ENCODE measurements at regions of chr6 and their contacts with region 1.

Region 1: GRCh38 chr6:32244946-32245398 is 21.1 kb upstream of the NOTCH4 start:
- DNase-seq: peak; percentile 23 to 89
- H3K4me3 ChIP-seq: peak overlapping the region in 1 of 2 donors; percentile 29
- H3K27ac ChIP-seq: peak overlapping the region; percentile 18 to 49
- H3K4me1 ChIP-seq: peaks cover 3% of the 10 kb centered on the region in 2 donors
- H3K27me3 ChIP-seq: no peaks in the 10 kb centered on the region
- CTCF ChIP-seq: peak; percentile 89 to 92 (median 89)

Region 2: DNA sequence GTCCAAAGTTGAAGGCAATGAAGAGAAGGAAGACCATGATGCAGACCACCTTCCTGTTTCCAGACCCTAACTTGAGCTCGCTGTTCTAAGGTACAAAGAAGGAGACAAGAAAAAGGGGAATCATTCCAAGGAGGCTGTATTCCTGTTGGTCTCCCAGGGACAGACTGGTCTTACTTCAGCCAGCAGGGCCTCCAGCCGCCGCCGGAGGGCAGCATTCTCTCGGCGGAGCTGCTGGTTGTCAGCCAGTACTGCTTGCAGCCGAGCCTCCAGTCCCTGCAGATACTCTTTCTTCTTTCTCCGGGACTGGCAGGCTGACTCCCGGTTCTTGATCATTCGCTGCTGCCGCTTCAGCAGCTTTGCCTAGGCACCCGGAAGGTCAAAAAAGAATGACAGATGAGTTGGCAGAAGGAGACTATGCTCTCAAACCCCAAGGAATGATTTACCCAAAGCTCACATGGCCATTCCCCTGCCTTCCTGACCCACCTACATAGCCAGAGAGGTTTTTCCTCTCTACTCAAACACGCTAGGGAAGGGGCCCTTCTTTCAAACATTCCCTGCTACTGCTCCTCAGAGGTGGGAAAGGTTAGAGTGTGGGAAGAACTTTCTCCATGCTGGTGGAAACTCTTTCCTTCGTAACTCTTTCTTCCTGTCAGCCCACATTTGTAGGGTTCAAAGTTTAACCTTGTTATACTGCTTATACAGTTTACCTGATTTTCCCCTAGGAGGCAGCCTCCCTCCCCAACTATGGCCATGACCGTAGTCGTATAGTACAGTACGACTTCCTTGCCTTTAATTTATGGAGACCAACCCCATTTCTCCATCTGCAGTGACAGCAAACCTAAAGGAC is 126.0 kb before region 1 on chr6:
- intact Hi-C with region 1: loop called (anchors 5 kb)
- DNase-seq: peak in 1 of 2 donors; percentile 90
- H3K4me3 ChIP-seq: no peak overlapping the region
- H3K27ac ChIP-seq: peak overlapping the region in 1 of 2 donors; percentile 10
- H3K4me1 ChIP-seq: peaks cover 0 to 8% of the 10 kb centered on the region in 2 donors
- H3K27me3 ChIP-seq: no peaks in the 10 kb centered on the region
- CTCF ChIP-seq: peak; percentile 88 to 93 (median 89)

Region 3: GRCh38 chr6:32255199-32256153 is 10.5 kb after region 1 on chr6:
- intact Hi-C with region 1: loop called (anchors 1 kb)
- DNase-seq: peak in 1 of 2 donors; percentile 86
- H3K4me3 ChIP-seq: peak overlapping the region; percentile 46 to 62
- H3K27ac ChIP-seq: peak overlapping the region; percentile 53 to 56
- H3K4me1 ChIP-seq: peaks cover 0 to 3% of the 10 kb centered on the region in 2 donors
- H3K27me3 ChIP-seq: no peaks in the 10 kb centered on the region
- CTCF ChIP-seq: peak; percentile 45 to 77 (median 67)

Region 4: GRCh38 chr6:32413427-32414047 is 168.6 kb after region 1 on chr6:
- intact Hi-C with region 1: loop called (anchors 1 kb)
- DNase-seq: peak in 1 of 2 donors; percentile 81
- H3K4me3 ChIP-seq: no peak overlapping the region
- H3K27ac ChIP-seq: no peak overlapping the region
- H3K4me1 ChIP-seq: peaks cover 0 to 3% of the 10 kb centered on the region in 2 donors
- H3K27me3 ChIP-seq: no peaks in the 10 kb centered on the region
- CTCF ChIP-seq: peak; percentile 71 to 90 (median 88)

Region 5: GRCh38 chr6:32796848-32797776 is 552.1 kb after region 1 on chr6:
- intact Hi-C with region 1: loop called (anchors 10 kb)
- DNase-seq: peak in 1 of 2 donors; percentile 86
- H3K4me3 ChIP-seq: peak overlapping the region; percentile 19 to 45
- H3K27ac ChIP-seq: no peak overlapping the region
- H3K4me1 ChIP-seq: no peaks in the 10 kb centered on the region
- H3K27me3 ChIP-seq: peaks cover 4% of the 10 kb centered on the region
- CTCF ChIP-seq: peak; percentile 80 to 89 (median 88)

Measured in ascending aorta (tissue), 2 donors.